Right cardiac atrium (tissue), 5 donors: ENCODE measurements at regions of chr5 and their contacts with region 1.

Region 1: DNA sequence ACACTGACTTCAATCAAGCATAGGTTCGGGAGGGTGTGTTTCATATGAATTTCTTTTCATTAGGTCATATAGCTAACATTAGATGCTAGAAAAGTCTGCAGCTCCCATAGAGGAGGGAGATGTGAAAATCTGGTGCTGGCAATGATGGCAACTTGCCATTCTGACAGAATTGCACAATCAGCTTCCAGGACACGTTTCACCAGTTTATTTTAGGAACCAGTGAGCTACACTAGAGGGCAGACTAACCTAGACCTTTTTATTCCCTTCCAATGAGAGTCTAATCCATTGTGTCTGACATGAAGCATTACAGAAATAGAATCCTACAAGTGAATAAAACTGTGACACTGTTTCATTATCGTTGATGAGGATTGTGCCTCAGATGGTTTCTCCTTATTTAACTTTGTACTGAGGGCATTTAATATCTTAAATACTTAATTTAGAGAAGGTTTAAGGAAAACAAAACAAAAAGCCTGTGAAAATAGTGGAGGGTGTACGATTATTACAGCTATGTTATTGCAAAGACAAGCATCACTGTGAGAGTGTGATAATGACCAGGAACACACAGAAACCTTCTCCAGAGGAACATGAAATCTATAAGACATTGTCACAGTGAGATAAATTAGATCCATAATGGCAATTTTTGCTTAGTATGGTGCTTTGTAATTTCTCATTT is 363.3 kb upstream of the RPS23 start:
- DNase-seq: peak; percentile 63 to 78 (median 69)
- ATAC-seq: peak; percentile 95 to 96
- H3K4me3 ChIP-seq: no peak overlapping the region
- H3K27ac ChIP-seq: no peak overlapping the region
- H3K4me1 ChIP-seq: peaks cover 2% of the 10 kb centered on the region
- H3K27me3 ChIP-seq: no peaks in the 10 kb centered on the region

Region 2: DNA sequence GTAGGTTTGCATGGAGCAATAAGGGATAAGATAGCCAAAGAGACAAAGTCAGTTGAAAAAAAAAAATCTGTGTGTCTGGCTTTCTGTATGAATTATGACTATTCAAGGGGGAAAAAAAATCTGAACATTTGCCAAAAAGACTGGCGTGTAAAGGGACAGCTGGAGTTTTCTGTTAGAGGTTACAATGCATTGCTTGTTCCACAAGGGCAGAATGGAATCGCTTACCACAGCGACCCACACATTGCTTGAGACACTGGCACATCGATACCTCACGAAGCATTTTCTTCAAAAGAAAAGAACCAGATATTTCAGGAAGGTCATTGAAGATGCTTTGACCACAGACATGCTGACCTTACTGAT is 108.0 kb after region 1 on chr5:
- intact Hi-C with region 1: no loop called
- DNase-seq: no peak
- ATAC-seq: peak; percentile 68 to 70
- H3K4me3 ChIP-seq: no peak overlapping the region
- H3K27ac ChIP-seq: no peak overlapping the region
- H3K4me1 ChIP-seq: peaks cover 3% of the 10 kb centered on the region
- H3K27me3 ChIP-seq: no peaks in the 10 kb centered on the region

Region 3: GRCh38 chr5:82793808-82794419 is 152.4 kb after region 1 on chr5:
- intact Hi-C with region 1: loop called in 1 of 4 experiments (anchors 10 kb)
- DNase-seq: no peak
- ATAC-seq: no peak
- H3K4me3 ChIP-seq: no peak overlapping the region
- H3K27ac ChIP-seq: no peak overlapping the region
- H3K4me1 ChIP-seq: no peaks in the 10 kb centered on the region
- H3K27me3 ChIP-seq: no peaks in the 10 kb centered on the region

Region 4: DNA sequence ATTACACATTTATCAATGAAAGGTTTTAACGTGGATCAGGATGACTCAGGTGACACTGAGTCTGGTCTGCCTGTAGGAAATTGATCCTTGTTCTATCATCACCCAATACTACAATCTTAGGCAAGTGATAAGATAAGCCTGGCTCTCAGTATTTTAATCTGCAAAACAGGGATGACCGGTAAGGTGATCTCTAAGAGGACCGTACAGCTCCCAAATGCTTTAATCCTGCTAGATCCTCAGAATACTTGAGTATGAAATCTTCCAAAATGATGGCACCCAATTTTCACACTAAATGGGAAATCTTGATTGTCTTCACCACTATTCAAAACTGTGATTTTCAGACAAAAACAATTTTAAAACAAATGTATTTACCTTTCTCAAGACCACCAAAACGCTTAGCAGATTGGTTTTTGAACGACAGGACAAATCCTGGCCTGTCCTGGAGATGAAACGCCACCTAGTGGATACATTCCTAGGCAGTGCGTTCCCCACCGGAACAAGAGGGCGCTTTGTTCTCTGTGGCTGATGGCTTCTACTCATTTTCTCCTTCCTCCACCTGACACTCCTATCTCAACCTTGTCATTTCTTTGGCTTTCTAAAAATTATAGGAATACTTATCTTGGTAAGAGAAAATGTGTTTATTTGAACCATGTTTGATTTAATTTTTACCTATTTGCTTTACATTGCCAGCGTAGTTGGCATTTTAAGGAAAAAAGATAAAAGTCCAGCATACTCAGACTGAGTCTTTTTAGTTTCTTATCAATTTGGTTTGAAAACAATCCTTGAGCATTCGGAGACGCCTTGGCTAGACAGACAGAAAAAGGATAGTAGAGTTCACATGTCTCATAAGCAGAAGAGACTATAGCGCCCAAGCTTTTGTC is 788.9 kb after region 1 on chr5:
- intact Hi-C with region 1: loop called in 2 of 4 experiments (anchors 10 kb)
- DNase-seq: peak; percentile 47 to 57 (median 51)
- ATAC-seq: peak; percentile 87 to 88
- H3K4me3 ChIP-seq: no peak overlapping the region
- H3K27ac ChIP-seq: no peak overlapping the region
- H3K4me1 ChIP-seq: peaks cover 1% of the 10 kb centered on the region
- H3K27me3 ChIP-seq: no peaks in the 10 kb centered on the region

Region 5: DNA sequence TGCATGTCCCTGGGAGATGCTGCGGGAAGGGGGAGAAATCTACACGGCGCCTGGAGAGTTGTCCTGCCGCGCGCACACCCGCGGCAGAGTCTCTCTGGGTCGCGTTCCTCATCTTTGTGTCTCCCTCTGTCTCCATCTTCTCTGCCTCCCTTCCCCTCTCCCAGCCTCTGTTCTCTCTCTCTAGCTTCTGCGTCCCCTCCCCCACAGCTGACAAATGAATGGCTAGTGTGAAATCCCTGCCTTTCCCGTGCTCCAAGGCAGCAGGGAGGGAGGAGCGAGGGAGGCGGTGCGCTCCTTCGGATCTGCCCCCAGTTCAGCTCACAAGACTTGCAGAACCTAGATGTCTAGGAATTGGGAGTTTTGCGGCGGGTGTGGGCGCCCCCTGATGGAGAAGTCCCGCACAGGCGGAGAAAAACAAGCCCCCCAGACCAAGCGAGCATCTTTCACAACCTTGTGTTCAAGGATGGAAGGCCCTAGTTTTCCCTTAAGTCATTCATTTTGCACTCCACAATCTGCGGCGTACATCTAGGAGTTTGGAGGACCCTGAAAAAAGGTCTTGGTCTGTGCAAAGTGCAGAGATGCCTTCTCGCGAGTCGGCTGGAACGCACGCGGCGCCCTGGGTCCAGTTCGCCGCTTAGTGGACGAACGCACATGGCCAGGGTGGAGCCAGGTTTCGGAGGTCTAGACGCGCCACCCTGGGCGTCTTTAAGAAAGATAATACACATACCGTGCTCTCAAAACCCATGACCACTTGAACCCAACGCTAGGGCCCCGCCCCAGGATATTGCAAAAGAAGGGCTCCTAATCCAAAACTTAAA is 832.1 kb after region 1 on chr5:
- intact Hi-C with region 1: loop called in 1 of 4 experiments (anchors 10 kb)
- DNase-seq: peak; percentile 94 to 97 (median 96)
- ATAC-seq: peak; percentile 89 to 90
- H3K4me3 ChIP-seq: peak overlapping the region; percentile 49
- H3K27ac ChIP-seq: peak overlapping the region; percentile 76
- H3K4me1 ChIP-seq: no peaks in the 10 kb centered on the region
- H3K27me3 ChIP-seq: no peaks in the 10 kb centered on the region

Region 6: GRCh38 chr5:83564069-83564749 is 922.7 kb after region 1 on chr5:
- intact Hi-C with region 1: loop called in 2 of 4 experiments (anchors 5 to 10 kb)
- DNase-seq: no peak
- ATAC-seq: peak; percentile 56 to 70
- H3K4me3 ChIP-seq: no peak overlapping the region
- H3K27ac ChIP-seq: no peak overlapping the region
- H3K4me1 ChIP-seq: peaks cover 2% of the 10 kb centered on the region
- H3K27me3 ChIP-seq: no peaks in the 10 kb centered on the region